ENCODE measurements at regions of chr2 and their contacts with region 1.

Region 1: GRCh38 chr2:169573160-169573973 is at the start of gene FASTKD1:
- DNase-seq: peak; percentile 90
- H3K4me3 Mint-ChIP-seq: peak within 1 kb of the TSS; percentile 92
- H3K27ac Mint-ChIP-seq: peak within 1 kb of the TSS; percentile 74
- H3K4me1 Mint-ChIP-seq: peaks cover 31% of the 10 kb centered on the region
- H3K27me3 Mint-ChIP-seq: peaks cover 3% of the 10 kb centered on the region
- total RNA-seq, gene FASTKD1: 35.4 to 36.2 TPM

Region 2: DNA sequence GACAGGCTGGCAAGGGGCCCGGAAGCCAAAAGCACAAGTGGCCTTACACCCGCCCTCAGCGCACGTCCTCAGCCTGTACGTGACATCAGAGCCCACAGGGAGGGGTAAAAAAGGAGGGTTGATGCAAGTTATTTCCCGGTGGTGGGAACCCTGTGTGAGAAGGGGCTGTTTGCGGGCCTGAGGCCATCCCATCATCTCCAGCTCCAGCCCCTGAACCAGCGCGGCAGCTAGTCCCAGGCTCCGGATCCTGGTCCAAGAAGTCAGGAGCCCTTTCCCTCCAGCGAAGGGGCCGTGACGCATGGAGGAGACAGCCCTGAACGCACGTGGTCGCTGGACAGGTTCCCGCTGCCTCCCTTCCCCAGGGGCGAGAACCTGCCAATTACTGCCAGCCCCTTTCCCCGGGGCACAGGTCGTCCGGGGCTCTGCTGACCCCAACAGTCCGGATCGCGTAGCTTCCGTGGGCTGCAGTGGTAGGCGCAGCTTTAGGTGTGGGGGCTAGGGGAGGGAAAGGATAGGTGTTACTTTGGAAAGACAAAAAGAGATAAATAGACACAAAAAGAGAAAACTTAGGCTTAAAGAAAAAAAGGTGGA is 209.7 kb before region 1 on chr2:
- CTCF ChIA-PET with region 1: no interaction called
- POLR2A ChIA-PET with region 1: no interaction called
- DNase-seq: peak; percentile 68
- H3K4me3 Mint-ChIP-seq: peak overlapping the region; percentile 87
- H3K27ac Mint-ChIP-seq: peak overlapping the region; percentile 34
- H3K4me1 Mint-ChIP-seq: peaks cover 37% of the 10 kb centered on the region
- H3K27me3 Mint-ChIP-seq: peaks cover 44% of the 10 kb centered on the region

Region 3: DNA sequence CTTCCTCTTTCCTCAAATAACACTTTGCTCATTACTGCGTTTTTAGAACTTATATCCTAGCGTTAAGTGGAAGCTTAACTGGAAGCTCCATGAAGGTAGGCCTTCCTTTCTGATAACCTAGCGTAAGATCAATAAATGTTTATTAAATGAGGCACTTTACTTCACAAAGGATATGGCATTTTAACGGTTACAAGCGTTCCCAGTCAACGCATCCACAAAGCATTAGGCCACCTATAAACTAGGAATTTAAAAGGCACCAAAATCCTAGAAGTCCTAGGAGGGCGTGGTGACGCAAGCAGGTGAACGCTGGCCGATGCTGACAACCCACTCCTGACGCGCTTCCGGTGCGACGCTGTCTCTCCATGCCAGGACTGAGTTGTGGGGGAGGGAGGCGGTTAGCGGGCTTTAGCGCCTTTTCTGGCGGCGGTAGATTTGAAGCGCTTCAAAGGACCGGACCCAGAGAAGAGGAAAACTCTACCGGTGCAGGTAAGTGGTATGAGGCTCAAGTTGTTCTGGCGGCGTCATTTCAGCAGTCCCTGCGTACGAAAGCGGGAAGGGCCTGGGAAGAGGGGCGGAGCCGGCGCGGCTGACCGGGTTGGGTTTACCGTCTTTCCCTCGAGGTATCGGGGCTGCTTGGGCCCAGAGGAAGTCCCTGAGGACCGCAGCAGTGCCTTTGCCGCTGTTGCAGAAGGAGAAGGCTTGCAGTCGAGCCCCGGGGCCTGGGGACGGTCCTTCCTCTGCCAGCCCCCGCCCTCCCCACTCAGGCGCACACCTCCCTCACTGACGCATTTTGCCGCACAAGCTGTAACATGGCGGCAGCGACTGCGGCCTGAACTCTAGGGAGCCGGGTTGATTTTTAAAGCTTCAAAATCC is 10.9 kb after region 1 on chr2 and contains the start of gene PPIG:
- CTCF ChIA-PET with region 1: interaction called, 13 read pairs
- POLR2A ChIA-PET with region 1: interaction called, 62 read pairs
- DNase-seq: peak; percentile 89
- H3K4me3 Mint-ChIP-seq: peak within 1 kb of the TSS; percentile 99
- H3K27ac Mint-ChIP-seq: peak within 1 kb of the TSS; percentile 100
- H3K4me1 Mint-ChIP-seq: peaks cover 31% of the 10 kb centered on the region
- H3K27me3 Mint-ChIP-seq: no peaks in the 10 kb centered on the region
- total RNA-seq, gene PPIG: 48.8 to 49.6 TPM